Spleen (tissue), 13 donors: ENCODE measurements at regions of chr6 and their contacts with region 1.

Region 1: DNA sequence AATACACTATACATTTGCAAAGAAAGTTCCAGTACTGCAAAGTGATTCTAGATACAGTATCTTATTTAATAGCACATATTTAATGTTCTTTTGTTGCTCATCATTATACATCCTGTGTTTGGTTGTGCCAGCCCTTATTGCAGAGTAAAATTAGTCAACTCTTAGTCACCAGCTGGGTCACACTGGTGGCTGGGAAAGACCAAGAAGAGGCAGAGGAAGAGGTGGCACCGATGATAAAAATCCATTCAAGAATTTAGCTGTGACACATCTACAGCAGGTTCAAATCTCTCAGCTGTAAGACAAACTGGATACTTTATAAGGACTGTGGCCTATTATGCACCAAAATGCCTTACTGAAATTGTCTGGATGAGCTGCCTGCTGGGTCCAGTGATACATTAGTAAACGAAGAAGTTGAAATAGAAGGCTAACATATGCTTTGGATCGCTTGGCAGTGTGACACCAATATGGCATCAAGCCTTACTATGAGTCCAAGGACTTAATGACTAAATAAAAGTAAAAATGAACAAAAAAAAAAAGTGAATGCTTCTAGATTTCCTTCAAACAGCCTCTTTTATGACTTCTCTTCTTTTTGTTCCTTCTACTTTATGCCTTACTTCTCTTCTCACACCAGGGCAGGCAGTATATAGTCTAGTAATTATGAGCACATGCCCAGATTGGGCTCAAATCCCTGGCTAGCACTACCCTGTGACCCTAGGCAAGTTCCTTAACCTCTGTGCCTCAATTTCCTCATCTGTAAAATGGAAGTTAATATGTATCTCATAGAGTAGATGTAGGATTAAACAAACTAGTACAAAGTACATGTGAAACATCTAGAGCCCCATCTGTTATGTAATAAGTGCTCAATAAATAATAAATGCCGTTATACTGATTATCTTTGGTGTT is 29.4 kb upstream of the RNF8 start:
- DNase-seq: no peak
- H3K4me3 ChIP-seq: no peak overlapping the region
- H3K27ac ChIP-seq: no peak overlapping the region
- H3K4me1 ChIP-seq: peaks cover 0 to 5% (median 0%) of the 10 kb centered on the region in 6 donors
- H3K27me3 ChIP-seq: no peaks in the 10 kb centered on the region
- CTCF ChIP-seq: no peak
- POLR2A ChIP-seq: no peak

Region 2: GRCh38 chr6:37691904-37692806 is 367.8 kb after region 1 on chr6:
- intact Hi-C with region 1: loop called (anchors 5 kb)
- DNase-seq: peak; percentile 94
- H3K4me3 ChIP-seq: no peak overlapping the region
- H3K27ac ChIP-seq: no peak overlapping the region
- H3K4me1 ChIP-seq: peaks cover 6 to 33% (median 23%) of the 10 kb centered on the region in 6 donors
- H3K27me3 ChIP-seq: peaks cover 0 to 52% (median 36%) of the 10 kb centered on the region in 7 donors
- CTCF ChIP-seq: peak; percentile 95 to 99 (median 98)
- POLR2A ChIP-seq: no peak